Cardiac septum (tissue), 1 donor: ENCODE measurements at regions of chr2 and their contacts with region 1.

Region 1: DNA sequence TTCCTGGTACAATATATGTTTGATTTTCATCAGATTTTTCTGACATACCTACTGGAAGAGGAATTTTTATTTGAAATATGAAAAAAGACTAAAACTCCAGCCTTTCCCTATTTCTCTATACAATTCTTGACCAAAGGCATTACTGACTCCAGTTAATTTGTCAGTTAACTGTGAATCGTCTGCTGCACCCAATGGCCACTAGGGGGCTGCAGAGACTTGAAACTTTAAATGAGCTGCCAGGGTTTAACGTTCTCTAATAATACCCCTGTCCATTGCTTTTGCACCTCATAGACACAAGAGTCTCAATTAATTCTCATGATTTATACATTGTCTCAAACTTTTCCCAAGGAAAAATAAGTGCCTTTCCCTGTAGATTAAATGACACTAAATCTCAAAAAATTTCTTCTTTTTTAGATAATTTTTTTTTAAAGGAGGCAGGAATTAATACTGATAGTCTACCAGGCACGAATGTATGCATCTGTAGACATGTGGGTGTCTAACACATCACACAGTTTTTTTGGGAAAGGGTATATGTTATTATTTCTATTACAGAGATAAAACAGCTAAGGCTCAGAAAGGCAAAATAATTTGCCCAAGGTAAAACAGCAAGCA is 1.8 kb upstream of the ALK start:
- DNase-seq: no peak

Region 2: DNA sequence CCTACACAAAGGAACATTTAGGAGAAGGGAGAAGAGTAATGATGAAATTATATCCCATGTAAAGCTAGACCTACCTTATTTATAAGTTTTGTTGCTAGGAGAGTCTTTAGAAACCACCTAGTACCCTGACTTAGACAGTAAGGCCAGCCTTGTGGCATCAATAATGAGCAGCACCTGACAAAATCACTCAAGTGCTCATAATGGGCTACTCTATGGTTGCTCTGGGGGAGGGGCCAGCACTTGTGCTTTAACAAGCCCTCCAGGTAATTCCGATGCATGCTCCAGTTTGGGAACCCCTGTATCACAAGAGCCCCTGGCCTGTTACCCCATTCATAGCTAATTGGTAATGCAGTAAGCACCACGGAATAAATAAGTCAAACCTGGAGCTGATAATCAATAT is 101.1 kb after region 1 on chr2:
- intact Hi-C with region 1: loop called (anchors 2 kb)
- DNase-seq: no peak

Region 3: GRCh38 chr2:30072250-30072842 is 149.1 kb after region 1 on chr2:
- intact Hi-C with region 1: loop called (anchors 5 kb)
- DNase-seq: no peak

Region 4: GRCh38 chr2:30084915-30085314 is 161.7 kb after region 1 on chr2:
- intact Hi-C with region 1: no loop called
- DNase-seq: no peak